ENCODE measurements at regions of chr6 and their contacts with region 1.

Region 1: DNA sequence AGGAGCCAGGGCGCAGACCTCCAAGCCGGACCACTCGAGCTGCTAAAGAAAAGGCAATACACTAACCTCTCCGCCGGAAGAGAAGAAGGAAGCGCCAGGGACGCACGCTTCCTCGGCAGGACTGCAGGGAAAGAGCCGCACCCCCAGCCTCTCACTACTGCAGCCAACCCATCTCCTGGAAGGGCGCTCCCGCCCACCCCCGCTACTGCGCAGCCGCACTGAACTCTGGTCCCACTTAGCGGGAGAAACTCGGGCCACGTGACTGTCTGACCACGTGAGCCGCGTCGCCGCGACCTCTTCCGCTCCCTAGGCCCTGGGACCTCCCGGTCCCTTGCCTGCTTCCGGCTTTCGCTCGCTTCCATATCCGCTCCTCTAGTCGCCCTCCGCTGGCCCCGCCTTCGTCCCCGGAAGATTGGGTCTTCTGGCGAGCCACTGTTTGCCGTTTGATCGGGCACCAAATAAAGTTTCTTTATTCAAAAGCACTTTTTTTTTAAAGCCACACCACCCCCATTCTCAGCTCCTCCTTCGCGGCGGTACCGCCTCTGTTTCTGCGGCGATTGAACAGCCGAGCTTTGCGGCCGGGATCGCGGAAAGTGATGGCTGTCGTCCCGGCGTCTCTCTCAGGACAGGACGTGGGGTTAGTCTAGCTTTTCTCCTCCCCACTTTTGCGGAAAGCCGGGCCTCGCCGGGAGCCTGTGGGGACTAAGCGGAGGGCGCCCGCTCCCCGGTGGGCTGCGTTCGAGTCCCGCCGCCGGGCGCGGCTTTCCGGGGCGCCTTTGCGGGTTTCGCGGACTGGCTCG is at the start of gene RMND1:
- DNase-seq: peak; percentile 100
- H3K4me3 Mint-ChIP-seq: peak within 1 kb of the TSS; percentile 97
- H3K27ac Mint-ChIP-seq: peak within 1 kb of the TSS; percentile 86
- H3K4me1 Mint-ChIP-seq: peaks cover 27% of the 10 kb centered on the region
- H3K27me3 Mint-ChIP-seq: no peaks in the 10 kb centered on the region
- total RNA-seq, gene RMND1: 16.7 to 18.4 TPM

Region 2: GRCh38 chr6:150865406-150866146 is 586.6 kb before region 1 on chr6 and contains the start of gene MTHFD1L:
- CTCF ChIA-PET with region 1: no interaction called
- intact Hi-C with region 1: loop called (anchors 1 kb)
- DNase-seq: peak; percentile 79
- H3K4me3 Mint-ChIP-seq: peak within 1 kb of the TSS; percentile 96
- H3K27ac Mint-ChIP-seq: peak within 1 kb of the TSS; percentile 91
- H3K4me1 Mint-ChIP-seq: peaks cover 30% of the 10 kb centered on the region
- H3K27me3 Mint-ChIP-seq: peaks cover 15% of the 10 kb centered on the region
- total RNA-seq, gene MTHFD1L: 181 to 194 TPM

Region 3: GRCh38 chr6:151379933-151380847 is 72.0 kb before region 1 on chr6:
- CTCF ChIA-PET with region 1: no interaction called
- intact Hi-C with region 1: loop called (anchors 2 kb)
- DNase-seq: peak; percentile 33
- H3K4me3 Mint-ChIP-seq: peak overlapping the region; percentile 86
- H3K27ac Mint-ChIP-seq: peak overlapping the region; percentile 98
- H3K4me1 Mint-ChIP-seq: peaks cover 61% of the 10 kb centered on the region
- H3K27me3 Mint-ChIP-seq: no peaks in the 10 kb centered on the region

Region 4: DNA sequence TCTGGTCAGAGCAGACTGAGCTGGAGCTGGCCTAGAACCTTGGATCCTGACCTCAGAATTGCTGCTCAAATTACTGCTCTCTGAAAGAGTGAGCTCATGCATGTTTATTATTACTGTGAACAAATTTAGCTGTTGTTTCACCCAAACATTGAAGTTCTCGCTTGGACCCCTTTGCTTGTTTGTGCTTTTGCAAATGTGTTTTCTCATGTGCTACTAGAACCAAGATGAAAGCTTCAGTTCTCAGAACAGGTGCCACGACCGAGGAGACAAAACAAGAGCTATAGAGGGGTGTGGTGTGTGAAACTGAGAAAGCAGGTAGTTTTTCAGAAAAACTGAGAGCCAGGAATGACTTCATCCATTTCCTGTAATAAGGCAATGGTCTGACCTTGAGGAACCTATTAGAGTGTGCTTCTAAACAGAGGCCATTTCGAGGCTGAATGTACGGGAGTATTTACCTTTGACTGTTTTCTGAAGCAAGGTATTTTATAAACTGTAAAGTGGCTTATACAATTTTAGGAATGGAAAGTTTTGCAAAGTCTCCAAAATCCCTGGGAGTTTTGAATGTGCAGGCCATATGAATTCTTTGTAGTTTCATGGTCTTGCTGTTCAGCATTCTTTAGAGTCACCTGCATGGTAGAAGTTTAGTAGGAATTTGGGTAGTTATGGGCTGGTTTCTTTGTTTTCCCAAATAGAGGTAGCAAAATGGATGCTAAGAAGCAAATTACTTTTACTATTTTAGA is 305.5 kb after region 1 on chr6:
- CTCF ChIA-PET with region 1: interaction called, 4 read pairs
- intact Hi-C with region 1: loop called (anchors 5 kb)
- DNase-seq: peak; percentile 67
- H3K4me3 Mint-ChIP-seq: peak overlapping the region; percentile 36
- H3K27ac Mint-ChIP-seq: peak overlapping the region; percentile 80
- H3K4me1 Mint-ChIP-seq: peaks cover 37% of the 10 kb centered on the region
- H3K27me3 Mint-ChIP-seq: no peaks in the 10 kb centered on the region

Region 5: DNA sequence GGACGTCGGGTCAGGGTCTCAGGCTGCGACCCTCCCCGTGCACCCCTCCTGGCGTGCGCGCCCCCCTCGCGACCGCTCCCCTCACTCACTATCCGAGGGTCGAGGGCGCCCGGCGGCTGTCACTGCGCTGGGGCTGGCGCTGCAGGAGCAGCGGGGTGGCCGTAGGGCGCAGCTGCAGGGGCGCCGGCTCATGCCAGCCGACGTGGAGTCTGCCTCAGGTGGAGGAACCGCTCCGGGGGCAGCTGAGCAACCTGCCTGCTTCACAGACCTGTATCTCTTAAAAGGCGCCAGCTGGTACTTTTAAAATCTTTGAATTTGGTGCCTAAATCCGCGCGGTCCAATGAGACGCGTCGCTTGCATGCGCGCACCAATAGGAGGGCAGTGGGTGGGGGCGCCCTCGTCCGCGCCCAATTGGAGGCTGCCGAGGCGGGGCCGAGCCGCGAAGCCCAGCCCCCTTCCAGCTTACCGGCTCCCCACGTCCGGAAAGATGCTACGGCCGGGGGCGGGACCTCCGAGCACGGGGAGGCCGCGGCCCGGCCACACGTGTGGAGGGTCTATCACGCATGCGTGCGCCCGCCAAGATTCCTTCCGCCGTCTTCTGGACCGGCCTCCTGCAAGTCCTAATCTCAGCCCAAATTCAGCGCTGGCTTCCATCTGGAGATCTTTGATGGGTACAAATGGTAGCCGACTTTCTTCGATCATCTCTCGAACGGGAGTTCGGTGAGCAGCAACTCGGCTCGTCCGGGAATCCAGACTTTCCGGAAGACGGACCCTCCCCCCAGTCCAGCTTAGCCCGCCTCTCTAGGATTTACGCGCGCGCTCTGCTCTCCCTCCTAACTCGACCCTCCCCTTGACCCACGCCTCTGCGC is 1530.9 kb after region 1 on chr6 and contains the start of gene FBXO5:
- CTCF ChIA-PET with region 1: no interaction called
- intact Hi-C with region 1: loop called (anchors 2 kb)
- DNase-seq: peak; percentile 97
- H3K4me3 Mint-ChIP-seq: peak within 1 kb of the TSS; percentile 99
- H3K27ac Mint-ChIP-seq: peak within 1 kb of the TSS; percentile 100
- H3K4me1 Mint-ChIP-seq: peaks cover 44% of the 10 kb centered on the region
- H3K27me3 Mint-ChIP-seq: no peaks in the 10 kb centered on the region
- total RNA-seq, gene FBXO5: 61.4 to 62.3 TPM

Measured in activated naive CD4-positive, alpha-beta T cell treated with anti-CD3 and anti-CD28 coated beads for 36 hours (primary cell).